Ascending aorta (tissue), 2 donors: ENCODE measurements at regions of chr7 and their contacts with region 1.

Region 1: DNA sequence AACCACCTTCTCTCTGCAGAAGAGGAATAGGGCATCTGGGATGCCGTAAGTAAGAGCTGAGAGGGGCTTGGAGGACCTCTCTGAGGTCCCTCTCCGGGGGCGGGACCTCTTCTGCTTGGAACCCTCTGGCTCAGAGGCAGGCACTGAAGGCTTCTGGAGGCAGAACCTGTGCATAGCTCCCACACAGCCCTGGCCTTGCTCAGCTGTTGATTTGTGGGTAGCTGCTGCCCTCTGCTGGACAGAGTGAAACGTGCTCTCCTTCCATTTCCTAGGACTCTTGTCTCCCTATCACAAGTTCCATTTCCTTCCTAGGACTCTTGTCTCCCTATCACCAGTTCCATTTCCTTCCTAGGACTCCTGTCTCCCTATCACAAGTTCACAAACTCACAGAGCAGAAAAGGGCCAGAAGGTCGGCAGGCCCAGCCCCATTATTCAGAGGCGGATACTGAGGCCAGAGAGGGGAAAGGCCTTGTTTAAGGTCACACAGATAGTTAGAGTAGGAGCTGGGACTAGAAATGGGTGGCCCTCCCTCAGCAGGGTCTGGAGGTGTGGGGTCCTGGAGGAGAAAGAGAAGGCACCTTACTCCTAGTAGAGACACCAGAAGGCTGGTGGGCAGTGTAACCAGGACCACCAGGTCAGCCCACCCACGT is 30.3 kb upstream of the GARS1 start:
- DNase-seq: peak in 1 of 2 donors; percentile 86
- H3K4me3 ChIP-seq: no peak overlapping the region
- H3K27ac ChIP-seq: no peak overlapping the region
- H3K4me1 ChIP-seq: no peaks in the 10 kb centered on the region
- H3K27me3 ChIP-seq: no peaks in the 10 kb centered on the region
- CTCF ChIP-seq: peak; percentile 73 to 77 (median 76)

Region 2: DNA sequence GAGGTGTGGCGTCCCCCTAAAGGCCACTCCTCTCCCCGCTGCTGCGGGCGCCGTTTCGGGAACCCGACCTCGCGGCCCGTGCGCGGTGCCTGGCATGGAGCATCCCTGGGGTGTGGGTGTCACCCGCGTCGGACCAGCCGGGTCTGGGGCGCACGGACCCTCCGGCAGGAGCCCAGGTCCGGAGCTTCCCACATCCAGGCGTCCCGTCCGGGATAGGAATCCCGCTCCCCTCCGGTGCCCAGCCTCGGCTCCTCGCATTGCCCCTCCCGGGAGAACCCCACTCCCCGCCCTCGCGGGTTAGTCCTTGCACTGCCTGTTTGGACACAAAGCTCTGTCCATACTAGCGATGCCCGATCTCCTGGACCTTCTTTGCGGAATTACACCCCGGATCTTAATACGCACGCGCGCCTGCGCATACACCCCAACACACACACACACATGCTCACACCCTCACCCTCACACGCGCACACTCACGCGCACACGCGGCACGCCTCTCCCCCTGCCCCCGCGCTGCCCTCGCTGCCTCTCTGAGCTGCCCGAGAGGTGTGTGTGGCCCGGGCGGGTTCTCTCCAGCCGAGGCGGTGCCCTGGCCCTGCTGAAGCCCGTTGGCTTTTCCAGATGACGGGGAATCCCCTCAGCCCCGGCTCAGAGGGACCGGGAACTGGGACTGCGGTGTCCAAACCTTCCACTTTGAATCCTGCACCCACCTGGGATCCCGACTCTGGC is 428.7 kb before region 1 on chr7:
- intact Hi-C with region 1: no loop called
- DNase-seq: peak in 1 of 2 donors; percentile 81
- H3K4me3 ChIP-seq: peak overlapping the region; percentile 84 to 85
- H3K27ac ChIP-seq: peak overlapping the region; percentile 89 to 96
- H3K4me1 ChIP-seq: peaks cover 10 to 17% of the 10 kb centered on the region in 2 donors
- H3K27me3 ChIP-seq: no peaks in the 10 kb centered on the region
- CTCF ChIP-seq: no peak

Region 3: DNA sequence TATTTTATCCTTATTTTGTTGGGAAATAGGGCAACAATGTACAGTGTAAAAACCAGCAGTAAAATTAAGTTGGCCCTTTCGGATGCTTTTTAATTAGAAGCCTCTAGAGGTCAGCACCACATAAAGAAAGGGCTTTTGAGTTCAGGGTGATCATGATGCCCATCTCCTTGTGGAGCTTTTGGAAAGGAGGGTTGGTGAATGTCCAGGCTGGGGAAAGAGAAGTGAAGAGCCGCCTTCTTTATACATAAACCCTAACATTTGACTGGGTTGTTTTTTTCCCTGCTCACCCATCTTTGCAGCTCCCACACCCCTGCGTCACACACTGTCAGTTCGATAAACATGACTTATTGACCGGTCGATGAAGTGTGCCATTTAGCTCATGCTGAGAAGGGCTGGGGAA is 399.8 kb before region 1 on chr7:
- intact Hi-C with region 1: loop called (anchors 10 kb)
- DNase-seq: no peak
- H3K4me3 ChIP-seq: no peak overlapping the region
- H3K27ac ChIP-seq: peak overlapping the region in 1 of 2 donors; percentile 47
- H3K4me1 ChIP-seq: peaks cover 0 to 5% of the 10 kb centered on the region in 2 donors
- H3K27me3 ChIP-seq: no peaks in the 10 kb centered on the region
- CTCF ChIP-seq: peak; percentile 49 to 61 (median 52)

Region 4: GRCh38 chr7:30276203-30276900 is 288.0 kb before region 1 on chr7:
- intact Hi-C with region 1: loop called (anchors 10 kb)
- DNase-seq: no peak
- H3K4me3 ChIP-seq: no peak overlapping the region
- H3K27ac ChIP-seq: no peak overlapping the region
- H3K4me1 ChIP-seq: no peaks in the 10 kb centered on the region
- H3K27me3 ChIP-seq: no peaks in the 10 kb centered on the region
- CTCF ChIP-seq: peak; percentile 11 to 49 (median 29)

Region 5: GRCh38 chr7:30548762-30549344 is 15.5 kb before region 1 on chr7:
- intact Hi-C with region 1: loop called (anchors 2 kb)
- DNase-seq: peak in 1 of 2 donors; percentile 78
- H3K4me3 ChIP-seq: no peak overlapping the region
- H3K27ac ChIP-seq: no peak overlapping the region
- H3K4me1 ChIP-seq: peaks cover 0 to 11% of the 10 kb centered on the region in 2 donors
- H3K27me3 ChIP-seq: no peaks in the 10 kb centered on the region
- CTCF ChIP-seq: peak; percentile 61 to 82 (median 79)